ENCODE measurements at regions of chr17 and their contacts with region 1.

Region 1: GRCh38 chr17:50200457-50201275 is 765 bp downstream of the COL1A1 start:
- DNase-seq: no peak
- ATAC-seq: peak; percentile 88
- H3K4me3 ChIP-seq: peak overlapping the region; percentile 70
- H3K27ac ChIP-seq: no peak overlapping the region
- H3K4me1 ChIP-seq: peaks cover 9% of the 10 kb centered on the region
- H3K27me3 ChIP-seq: peaks cover 9 to 13% of the 10 kb centered on the region in 2 experiments
- CTCF ChIP-seq: peak; percentile 70 to 99 (median 92)
- EP300 ChIP-seq: no peak
- POLR2A ChIP-seq: no peak
- RAD21 ChIP-seq: peak; percentile 92

Region 2: DNA sequence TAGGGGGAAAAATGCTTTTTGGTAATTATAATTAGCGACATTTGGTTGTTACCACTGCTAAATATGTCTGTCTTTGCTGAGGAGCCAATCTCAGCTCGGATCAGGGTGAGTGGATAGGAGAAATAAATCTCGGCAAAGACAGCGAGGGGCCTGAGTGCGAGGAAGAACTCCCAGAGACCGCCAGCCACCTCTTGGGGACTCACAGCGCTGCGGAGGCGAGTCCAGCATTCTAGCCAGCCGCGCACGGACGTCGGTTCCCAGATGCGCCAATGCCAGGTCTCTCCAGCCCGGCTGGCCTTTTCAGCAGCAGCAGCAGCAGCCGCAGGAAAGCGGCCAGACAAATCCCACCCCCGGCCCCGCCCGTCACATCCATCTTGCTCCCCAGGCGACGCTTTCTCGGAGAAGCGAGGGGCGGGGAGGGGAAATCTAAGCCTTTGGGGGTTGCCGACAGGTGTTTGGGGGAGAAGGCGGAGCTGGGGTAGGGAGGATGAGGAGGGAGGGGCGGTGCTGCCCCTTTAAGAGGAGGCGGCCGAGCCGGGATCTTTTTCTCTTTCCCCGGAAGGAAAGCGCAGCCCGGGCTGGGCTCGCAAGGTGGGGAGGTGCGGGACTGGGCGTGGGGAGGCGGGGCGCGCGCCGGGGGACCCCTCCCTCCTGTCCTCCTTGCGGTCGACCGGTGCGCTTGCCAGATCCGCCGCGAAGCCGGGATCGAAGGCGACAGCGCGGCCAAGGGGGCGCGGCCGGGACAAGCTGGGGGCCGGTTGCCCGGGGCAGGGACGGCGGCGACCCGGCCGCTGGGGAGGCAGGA is 145.0 kb before region 1 on chr17 and contains the start of gene ITGA3:
- CTCF ChIA-PET with region 1: no interaction called
- POLR2A ChIA-PET with region 1: no interaction called
- RAD21 ChIA-PET with region 1: no interaction called
- SMC1A ChIA-PET with region 1: no interaction called
- in situ Hi-C with region 1: no loop called
- intact Hi-C with region 1: no loop called
- DNase-seq: no peak
- ATAC-seq: peak; percentile 78
- H3K4me3 ChIP-seq: peak within 1 kb of the TSS; percentile 90
- H3K27ac ChIP-seq: no peak within 1 kb of the TSS
- H3K4me1 ChIP-seq: peaks cover 12% of the 10 kb centered on the region
- H3K27me3 ChIP-seq: no peaks in the 10 kb centered on the region
- CTCF ChIP-seq: no peak
- EP300 ChIP-seq: no peak
- POLR2A ChIP-seq: no peak
- RAD21 ChIP-seq: no peak
- polyA plus RNA-seq, gene ITGA3: 0.29 to 0.86 TPM

Region 3: GRCh38 chr17:50080827-50081226 is 119.8 kb before region 1 on chr17:
- CTCF ChIA-PET with region 1: no interaction called
- POLR2A ChIA-PET with region 1: no interaction called
- RAD21 ChIA-PET with region 1: no interaction called
- SMC1A ChIA-PET with region 1: no interaction called
- in situ Hi-C with region 1: no loop called
- intact Hi-C with region 1: no loop called
- DNase-seq: no peak
- ATAC-seq: peak; percentile 34; the same call in 2 of the 3 replicates
- H3K4me3 ChIP-seq: no peak overlapping the region
- H3K27ac ChIP-seq: no peak overlapping the region
- H3K4me1 ChIP-seq: peaks cover 5% of the 10 kb centered on the region; the same call in 1 of the 2 replicates
- H3K27me3 ChIP-seq: no peaks in the 10 kb centered on the region
- CTCF ChIP-seq: no peak
- EP300 ChIP-seq: no peak
- POLR2A ChIP-seq: no peak
- RAD21 ChIP-seq: no peak

Region 4: GRCh38 chr17:50114849-50115357 is 85.8 kb before region 1 on chr17:
- CTCF ChIA-PET with region 1: interaction called, 15 read pairs
- POLR2A ChIA-PET with region 1: no interaction called
- RAD21 ChIA-PET with region 1: interaction called, 3 read pairs
- SMC1A ChIA-PET with region 1: interaction called, 12 read pairs
- in situ Hi-C with region 1: no loop called
- intact Hi-C with region 1: no loop called
- DNase-seq: no peak
- ATAC-seq: peak; percentile 74
- H3K4me3 ChIP-seq: no peak overlapping the region
- H3K27ac ChIP-seq: no peak overlapping the region
- H3K4me1 ChIP-seq: no peaks in the 10 kb centered on the region
- H3K27me3 ChIP-seq: peaks cover 6% of the 10 kb centered on the region in 2 experiments; a peak in 3 of 4 replicates
- CTCF ChIP-seq: peak; percentile 69 to 77 (median 72)
- EP300 ChIP-seq: no peak
- POLR2A ChIP-seq: no peak
- RAD21 ChIP-seq: peak; percentile 64

Region 5: DNA sequence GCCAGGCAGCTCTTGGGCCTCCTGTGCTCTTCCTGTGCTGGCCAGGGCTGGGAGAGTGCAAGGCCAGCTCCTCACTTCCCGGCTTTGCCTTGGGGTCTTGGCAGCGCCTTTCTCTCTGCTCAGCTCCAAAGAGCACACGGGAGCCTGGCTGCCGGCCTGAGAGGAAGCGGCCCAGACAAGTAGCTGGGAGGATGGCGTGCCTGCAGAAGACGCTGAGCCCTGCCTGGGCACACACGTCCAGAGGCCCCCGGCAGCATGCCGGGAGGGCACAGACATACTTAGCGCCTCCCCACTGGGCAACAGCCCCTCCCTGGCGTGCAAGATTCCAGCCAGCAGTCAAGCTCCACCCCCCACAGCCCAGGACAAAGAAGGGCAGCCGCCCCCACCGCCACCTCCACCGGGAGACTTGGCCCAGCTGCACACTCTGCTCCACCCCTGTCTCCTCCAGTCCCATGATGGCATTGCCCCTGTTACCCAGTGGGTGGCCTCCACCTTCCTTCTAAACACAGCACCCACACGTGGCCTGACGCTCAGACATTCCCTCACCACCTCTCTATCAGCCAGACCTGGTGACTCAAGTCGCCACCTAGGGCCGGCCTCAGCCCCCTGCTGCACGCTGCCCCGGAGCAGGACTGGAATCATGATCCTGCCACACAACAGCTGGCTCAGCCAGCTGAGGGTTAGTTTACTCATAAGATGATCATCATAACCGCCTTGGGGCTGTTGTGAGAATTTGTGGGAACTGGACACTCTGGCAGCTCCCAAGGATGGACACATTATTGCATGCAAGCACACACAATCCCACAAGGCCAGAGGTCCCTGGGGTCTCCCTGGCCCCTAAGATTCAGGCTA is 22.5 kb before region 1 on chr17:
- CTCF ChIA-PET with region 1: interaction called, 514 read pairs
- POLR2A ChIA-PET with region 1: no interaction called
- RAD21 ChIA-PET with region 1: interaction called, 9 read pairs
- SMC1A ChIA-PET with region 1: interaction called, 17 read pairs
- in situ Hi-C with region 1: no loop called
- intact Hi-C with region 1: no loop called
- DNase-seq: no peak
- ATAC-seq: peak; percentile 96
- H3K4me3 ChIP-seq: no peak overlapping the region
- H3K27ac ChIP-seq: no peak overlapping the region
- H3K4me1 ChIP-seq: peaks cover 4% of the 10 kb centered on the region
- H3K27me3 ChIP-seq: no peaks in the 10 kb centered on the region
- CTCF ChIP-seq: peak; percentile 61 to 69 (median 65)
- EP300 ChIP-seq: no peak
- POLR2A ChIP-seq: no peak
- RAD21 ChIP-seq: 0 out of 2 replicates have a peak, but pooled peaks have one; percentile 38

Region 6: GRCh38 chr17:50238601-50239280 is 38.1 kb after region 1 on chr17:
- CTCF ChIA-PET with region 1: no interaction called
- POLR2A ChIA-PET with region 1: no interaction called
- RAD21 ChIA-PET with region 1: no interaction called
- SMC1A ChIA-PET with region 1: no interaction called
- in situ Hi-C with region 1: no loop called
- intact Hi-C with region 1: no loop called
- DNase-seq: no peak
- ATAC-seq: no peak
- H3K4me3 ChIP-seq: no peak overlapping the region
- H3K27ac ChIP-seq: no peak overlapping the region
- H3K4me1 ChIP-seq: no peaks in the 10 kb centered on the region
- H3K27me3 ChIP-seq: no peaks in the 10 kb centered on the region
- CTCF ChIP-seq: no peak
- EP300 ChIP-seq: no peak
- POLR2A ChIP-seq: no peak
- RAD21 ChIP-seq: no peak

Region 7: GRCh38 chr17:50269477-50270434 is 69.1 kb after region 1 on chr17:
- CTCF ChIA-PET with region 1: interaction called, 208 read pairs
- POLR2A ChIA-PET with region 1: interaction called, 7 read pairs
- RAD21 ChIA-PET with region 1: interaction called, 84 read pairs
- SMC1A ChIA-PET with region 1: interaction called, 71 read pairs
- in situ Hi-C with region 1: loop called (anchors 5 kb)
- intact Hi-C with region 1: loop called (anchors 1 kb)
- DNase-seq: peak; percentile 19
- ATAC-seq: peak; percentile 86
- H3K4me3 ChIP-seq: no peak overlapping the region
- H3K27ac ChIP-seq: no peak overlapping the region
- H3K4me1 ChIP-seq: no peaks in the 10 kb centered on the region; the same call in 1 of the 2 replicates
- H3K27me3 ChIP-seq: no peaks in the 10 kb centered on the region
- CTCF ChIP-seq: peak; percentile 77 to 87 (median 85)
- EP300 ChIP-seq: no peak
- POLR2A ChIP-seq: no peak
- RAD21 ChIP-seq: peak; percentile 65

Region 8: DNA sequence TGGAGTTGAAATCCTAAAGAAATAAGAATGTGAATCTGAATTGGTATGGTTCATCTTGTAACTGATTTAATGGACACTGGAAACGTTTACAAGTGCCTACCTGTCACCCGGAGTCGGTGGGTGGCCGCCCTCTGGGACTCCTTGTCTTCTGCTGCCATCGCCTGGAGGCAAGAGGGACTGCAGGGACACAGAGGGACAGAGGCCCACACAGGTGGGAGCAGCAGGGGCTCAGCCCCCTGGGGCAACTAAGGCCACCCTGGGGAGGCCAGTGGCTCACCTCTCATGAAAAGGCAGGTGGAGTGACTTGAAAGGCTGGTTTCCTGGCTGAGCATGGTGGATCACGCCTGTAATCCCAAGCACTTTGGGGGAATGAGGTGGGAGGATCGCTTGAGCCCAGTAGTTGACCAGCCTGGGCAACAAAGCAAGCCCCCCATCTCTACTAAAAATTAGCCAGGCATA is 96.8 kb after region 1 on chr17:
- CTCF ChIA-PET with region 1: interaction called, 294 read pairs
- POLR2A ChIA-PET with region 1: interaction called, 7 read pairs
- RAD21 ChIA-PET with region 1: interaction called, 106 read pairs
- SMC1A ChIA-PET with region 1: interaction called, 102 read pairs
- in situ Hi-C with region 1: loop called (anchors 10 kb)
- intact Hi-C with region 1: loop called (anchors 1 kb)
- DNase-seq: no peak
- ATAC-seq: peak; percentile 99
- H3K4me3 ChIP-seq: no peak overlapping the region
- H3K27ac ChIP-seq: no peak overlapping the region
- H3K4me1 ChIP-seq: no peaks in the 10 kb centered on the region
- H3K27me3 ChIP-seq: no peaks in the 10 kb centered on the region
- CTCF ChIP-seq: peak; percentile 94 to 98 (median 97); a peak in 5 of 6 replicates
- EP300 ChIP-seq: no peak
- POLR2A ChIP-seq: no peak
- RAD21 ChIP-seq: peak; percentile 100

Region 9: GRCh38 chr17:50345432-50346312 is 145.0 kb after region 1 on chr17 and contains the start of gene XYLT2:
- CTCF ChIA-PET with region 1: interaction called, 8 read pairs
- POLR2A ChIA-PET with region 1: no interaction called
- RAD21 ChIA-PET with region 1: interaction called, 4 read pairs
- SMC1A ChIA-PET with region 1: no interaction called
- in situ Hi-C with region 1: no loop called
- intact Hi-C with region 1: loop called (anchors 1 kb)
- DNase-seq: no peak
- ATAC-seq: peak; percentile 90
- H3K4me3 ChIP-seq: peak within 1 kb of the TSS; percentile 85
- H3K27ac ChIP-seq: peak within 1 kb of the TSS; percentile 59
- H3K4me1 ChIP-seq: peaks cover 3% of the 10 kb centered on the region
- H3K27me3 ChIP-seq: no peaks in the 10 kb centered on the region
- CTCF ChIP-seq: no peak
- EP300 ChIP-seq: no peak
- POLR2A ChIP-seq: peak; percentile 99
- RAD21 ChIP-seq: no peak
- polyA plus RNA-seq, gene XYLT2: 0.82 to 1.5 TPM

Measured in GM12878 (cell line).